Endothelial cell of umbilical vein (primary cell): ENCODE measurements at regions of chr2 and their contacts with region 1.

Region 1: DNA sequence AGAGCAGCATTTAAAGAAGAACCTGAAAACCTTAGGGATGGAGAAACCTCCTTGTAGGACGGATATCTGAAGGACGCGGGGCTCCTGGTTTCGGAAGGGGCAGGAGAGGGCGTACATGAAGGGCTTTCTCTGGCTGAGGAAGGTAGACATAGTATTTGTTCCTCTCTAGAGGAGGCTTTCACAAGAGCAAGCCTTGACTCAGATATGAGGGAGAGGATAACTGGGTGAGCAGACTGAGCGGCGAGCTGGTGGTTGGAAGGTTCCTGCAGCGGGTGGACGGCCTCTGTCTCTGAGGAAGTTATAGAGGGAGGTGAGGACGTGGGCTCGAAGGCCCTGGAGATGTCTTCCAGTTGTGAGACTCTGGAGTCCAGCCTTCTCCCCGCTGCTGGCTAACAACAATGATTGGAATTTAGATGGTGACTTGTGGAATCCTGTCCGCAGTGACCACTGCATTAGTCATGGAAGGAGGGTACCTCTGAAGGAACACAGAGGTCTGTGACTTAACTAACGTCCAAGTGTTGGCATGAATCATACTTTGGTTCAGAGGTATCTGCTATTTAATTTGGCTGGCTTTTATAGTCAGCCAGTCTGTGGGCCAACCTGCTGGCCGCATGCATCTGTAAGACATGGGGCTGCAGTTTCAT is 80.9 kb downstream of the ASAP2 start:
- DNase-seq: peak; percentile 93
- H3K4me3 ChIP-seq: no peak overlapping the region
- H3K27ac ChIP-seq: peak overlapping the region; percentile 86
- H3K4me1 ChIP-seq: peaks cover 39% of the 10 kb centered on the region
- H3K27me3 ChIP-seq: no peaks in the 10 kb centered on the region
- CTCF ChIP-seq: peak in 1 of 2 donors; percentile 33
- POLR2A ChIP-seq: peak; percentile 76

Region 2: GRCh38 chr2:9251154-9252001 is 36.1 kb before region 1 on chr2:
- CTCF ChIA-PET with region 1: interaction called, 8 read pairs
- POLR2A ChIA-PET with region 1: no interaction called
- dilution Hi-C with region 1: no loop called
- intact Hi-C with region 1: loop called (anchors 1 kb)
- DNase-seq: peak; percentile 81
- H3K4me3 ChIP-seq: no peak overlapping the region
- H3K27ac ChIP-seq: peak overlapping the region; percentile 94
- H3K4me1 ChIP-seq: peaks cover 61% of the 10 kb centered on the region
- H3K27me3 ChIP-seq: no peaks in the 10 kb centered on the region
- CTCF ChIP-seq: no peak
- POLR2A ChIP-seq: peak; percentile 10

Region 3: GRCh38 chr2:9258953-9259399 is 28.5 kb before region 1 on chr2:
- CTCF ChIA-PET with region 1: interaction called, 7 read pairs
- POLR2A ChIA-PET with region 1: interaction called, 3 read pairs
- dilution Hi-C with region 1: no loop called
- intact Hi-C with region 1: loop called (anchors 1 kb)
- DNase-seq: peak; percentile 68
- H3K4me3 ChIP-seq: no peak overlapping the region
- H3K27ac ChIP-seq: peak overlapping the region; percentile 42
- H3K4me1 ChIP-seq: peaks cover 81% of the 10 kb centered on the region
- H3K27me3 ChIP-seq: no peaks in the 10 kb centered on the region
- CTCF ChIP-seq: no peak
- POLR2A ChIP-seq: no peak

Region 4: GRCh38 chr2:9333591-9334171 is 46.2 kb after region 1 on chr2:
- CTCF ChIA-PET with region 1: interaction called, 7 read pairs
- POLR2A ChIA-PET with region 1: no interaction called
- dilution Hi-C with region 1: no loop called
- intact Hi-C with region 1: loop called (anchors 2 kb)
- DNase-seq: peak; percentile 84
- H3K4me3 ChIP-seq: no peak overlapping the region
- H3K27ac ChIP-seq: peak overlapping the region; percentile 18
- H3K4me1 ChIP-seq: peaks cover 10% of the 10 kb centered on the region
- H3K27me3 ChIP-seq: no peaks in the 10 kb centered on the region
- CTCF ChIP-seq: peak; percentile 63 to 75
- POLR2A ChIP-seq: no peak